ENCODE measurements at regions of chr19 and their contacts with region 1.

Region 1: DNA sequence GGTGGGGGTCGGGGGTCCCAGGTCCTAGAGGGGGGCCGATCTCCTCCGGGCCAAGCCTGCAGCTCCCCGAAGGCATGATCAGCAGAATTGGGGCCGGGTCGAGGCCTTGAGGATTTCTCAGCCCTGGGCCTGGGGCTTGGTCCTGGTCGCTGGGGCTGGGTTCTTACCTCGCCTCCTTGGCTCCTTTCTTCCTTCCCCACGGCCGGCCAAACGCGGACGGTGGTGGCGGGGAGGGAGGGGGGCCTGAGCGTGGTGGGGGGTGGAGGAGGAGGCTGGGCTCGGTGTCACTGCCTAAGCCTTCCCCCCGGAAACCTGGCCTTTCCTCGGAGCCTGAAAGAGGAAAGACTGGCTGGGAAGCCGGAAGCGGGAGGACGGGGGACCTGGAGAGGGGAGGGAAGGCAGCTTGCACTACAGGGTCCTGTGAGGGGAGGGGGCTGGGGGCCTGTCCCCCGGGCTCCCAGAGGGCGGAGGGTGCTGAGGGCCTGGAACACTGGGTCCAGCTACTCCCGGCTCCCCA is at the start of gene ZNF579:
- DNase-seq: peak; percentile 92 to 95
- ATAC-seq: peak; percentile 91
- H3K4me3 ChIP-seq: peak within 1 kb of the TSS; percentile 78 to 81
- H3K27ac ChIP-seq: peak within 1 kb of the TSS in 1 of 2 donors; percentile 52
- H3K4me1 ChIP-seq: no peaks in the 10 kb centered on the region
- H3K27me3 ChIP-seq: no peaks in the 10 kb centered on the region
- total RNA-seq, gene ZNF579: 12.9 to 13.1 TPM

Region 2: GRCh38 chr19:55173714-55174409 is 406.8 kb before region 1 on chr19:
- intact Hi-C with region 1: no loop called
- DNase-seq: peak; percentile 80 to 86
- ATAC-seq: peak; percentile 19
- H3K4me3 ChIP-seq: no peak overlapping the region
- H3K27ac ChIP-seq: no peak overlapping the region
- H3K4me1 ChIP-seq: no peaks in the 10 kb centered on the region
- H3K27me3 ChIP-seq: peaks cover 0 to 6% of the 10 kb centered on the region in 2 donors

Region 3: GRCh38 chr19:55484593-55485438 is 95.9 kb before region 1 on chr19 and contains the start of gene NAT14:
- intact Hi-C with region 1: no loop called
- DNase-seq: peak; percentile 72 to 89
- ATAC-seq: peak; percentile 39
- H3K4me3 ChIP-seq: peak within 1 kb of the TSS; percentile 5 to 39
- H3K27ac ChIP-seq: peak within 1 kb of the TSS in 1 of 2 donors; percentile 55
- H3K4me1 ChIP-seq: no peaks in the 10 kb centered on the region
- H3K27me3 ChIP-seq: no peaks in the 10 kb centered on the region
- total RNA-seq, gene NAT14: 15.3 to 16.2 TPM

Region 4: DNA sequence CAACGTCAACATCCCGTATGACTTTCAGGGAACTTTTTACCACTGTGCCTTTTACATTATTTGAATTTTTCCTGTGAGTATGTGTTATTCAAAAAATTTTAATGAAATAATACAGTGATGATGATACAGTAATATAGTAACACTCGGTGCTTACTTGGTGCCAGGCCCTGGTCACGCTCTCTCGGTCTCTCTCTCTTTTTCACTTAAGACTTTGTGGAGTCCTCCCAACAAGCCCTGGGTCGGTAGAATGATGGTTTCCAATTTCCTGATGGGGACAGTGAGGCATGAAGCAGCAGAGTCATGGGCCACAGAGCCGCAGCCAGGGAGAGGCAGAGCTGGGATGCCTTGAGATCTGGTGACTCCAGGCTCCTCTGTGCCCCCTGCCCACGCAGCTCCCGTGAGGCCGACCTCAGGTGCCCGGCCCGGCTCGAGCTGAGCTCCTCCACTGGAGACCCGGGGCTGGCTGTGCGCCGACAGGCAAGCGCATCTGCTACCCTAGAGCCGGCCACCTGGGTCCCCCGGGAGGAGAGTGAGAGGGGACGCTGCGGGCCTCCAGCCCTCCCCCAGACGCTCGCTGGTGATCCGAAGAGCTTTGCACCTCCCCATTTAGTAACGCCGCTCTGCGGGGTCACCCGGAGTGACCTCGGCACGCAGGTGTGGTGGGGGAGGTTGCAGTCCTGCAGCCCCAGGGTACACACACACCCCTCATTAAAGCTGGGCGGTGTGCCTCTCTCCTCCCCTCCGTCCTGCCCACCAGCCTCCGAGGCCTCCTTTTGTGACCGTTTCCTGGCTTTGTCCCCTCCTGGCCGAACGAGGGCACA is 31.0 kb before region 1 on chr19:
- intact Hi-C with region 1: loop called in 1 of 2 experiments (anchors 2 kb)
- DNase-seq: no peak
- ATAC-seq: peak; percentile 39
- H3K4me3 ChIP-seq: no peak overlapping the region
- H3K27ac ChIP-seq: peak overlapping the region in 1 of 2 donors; percentile 25
- H3K4me1 ChIP-seq: no peaks in the 10 kb centered on the region
- H3K27me3 ChIP-seq: no peaks in the 10 kb centered on the region

Region 5: GRCh38 chr19:55624109-55625003 is 43.7 kb after region 1 on chr19 and contains the start of gene ZNF784:
- intact Hi-C with region 1: no loop called
- DNase-seq: peak; percentile 94 to 97
- ATAC-seq: peak; percentile 97
- H3K4me3 ChIP-seq: peak within 1 kb of the TSS; percentile 58 to 62
- H3K27ac ChIP-seq: peak within 1 kb of the TSS in 1 of 2 donors; percentile 93
- H3K4me1 ChIP-seq: no peaks in the 10 kb centered on the region
- H3K27me3 ChIP-seq: no peaks in the 10 kb centered on the region
- total RNA-seq, gene ZNF784: 5.1 to 5.3 TPM

Measured in aorta (tissue), 5 donors.